ENCODE measurements at regions of chr14 and their contacts with region 1.

Region 1: GRCh38 chr14:32710731-32711680 is 227.7 kb upstream of the NPAS3 start:
- DNase-seq: no peak
- ATAC-seq: peak in 1 of 2 donors; percentile 47
- H3K4me3 ChIP-seq: peak overlapping the region in 1 of 4 donors; percentile 8
- H3K27ac ChIP-seq: peak overlapping the region in 1 of 4 donors; percentile 36
- H3K4me1 ChIP-seq: peaks cover 25 to 40% of the 10 kb centered on the region in 2 donors
- H3K27me3 ChIP-seq: no peaks in the 10 kb centered on the region
- CTCF ChIP-seq: peak; percentile 35 to 53 (median 41)
- POLR2A ChIP-seq: no peak

Region 2: DNA sequence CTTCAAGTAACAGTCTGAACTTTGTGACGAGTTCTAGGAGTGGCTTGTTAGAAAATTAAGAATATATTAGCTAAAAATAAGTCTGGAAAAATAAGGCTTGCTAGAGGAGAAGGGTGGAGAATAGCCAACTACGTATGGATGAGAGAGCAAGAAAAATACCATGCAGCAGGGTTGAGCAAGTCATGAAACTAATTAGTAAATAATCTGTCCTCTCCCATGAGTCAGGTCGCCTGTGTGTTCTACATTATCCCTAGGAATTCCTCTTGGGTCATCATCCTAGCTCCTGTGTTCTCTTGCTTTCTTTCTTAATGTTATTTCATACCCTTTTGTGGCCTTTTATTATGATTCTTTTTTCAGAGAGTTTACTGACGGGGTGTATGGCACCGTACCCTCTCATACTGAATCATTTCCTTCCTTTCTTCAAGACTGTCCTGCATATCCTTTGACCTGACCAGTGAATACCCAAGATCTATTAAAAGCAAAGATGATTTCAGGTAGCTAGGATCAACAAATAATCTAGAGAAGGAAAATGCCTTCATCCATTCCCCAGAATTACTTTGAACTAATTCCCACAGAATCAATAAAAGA is 50.5 kb after region 1 on chr14:
- in situ Hi-C with region 1: no loop called
- intact Hi-C with region 1: no loop called
- DNase-seq: no peak
- ATAC-seq: no peak
- H3K4me3 ChIP-seq: no peak overlapping the region
- H3K27ac ChIP-seq: no peak overlapping the region
- H3K4me1 ChIP-seq: no peaks in the 10 kb centered on the region
- H3K27me3 ChIP-seq: no peaks in the 10 kb centered on the region
- CTCF ChIP-seq: no peak
- POLR2A ChIP-seq: no peak

Region 3: DNA sequence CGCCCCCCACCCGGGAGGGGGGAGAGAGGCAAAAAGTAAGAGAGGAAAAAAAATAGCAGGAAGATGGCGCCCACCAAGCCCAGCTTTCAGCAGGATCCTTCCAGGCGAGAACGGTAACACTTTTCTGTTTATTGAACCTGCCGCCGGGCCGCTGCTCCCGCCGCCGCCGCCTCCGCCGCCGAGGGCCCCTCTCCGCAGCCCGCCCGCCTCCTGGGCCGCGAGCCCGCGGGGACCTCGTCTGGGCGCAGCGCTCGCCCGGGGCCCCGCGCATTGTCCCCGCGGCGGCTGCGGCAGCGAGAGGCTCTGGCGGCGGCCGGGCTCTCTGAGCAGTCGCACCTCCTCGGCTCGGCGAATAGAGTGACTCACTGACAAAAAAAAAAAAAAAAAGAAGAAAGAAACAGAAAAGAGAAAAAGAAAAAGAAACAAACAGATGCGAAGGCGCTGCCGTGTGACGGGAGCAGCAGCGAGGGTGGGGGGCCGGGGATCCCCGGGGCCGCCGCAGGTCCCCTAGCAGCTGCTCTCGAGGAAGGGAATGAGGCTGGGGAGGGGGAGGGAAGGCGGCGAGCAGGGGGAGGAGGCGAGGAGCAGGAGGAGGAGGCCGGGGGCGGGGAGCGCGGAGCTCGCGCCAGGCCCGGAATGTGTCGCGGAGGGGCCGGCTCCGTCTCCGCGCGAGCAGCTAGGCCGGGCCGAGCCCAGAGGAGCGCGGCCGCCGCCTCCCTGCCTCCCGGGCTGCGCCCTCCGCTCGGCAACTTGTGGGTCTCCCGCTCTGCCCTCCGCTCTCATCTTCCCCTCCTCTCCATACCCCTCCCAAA is 228.5 kb after region 1 on chr14:
- in situ Hi-C with region 1: no loop called
- intact Hi-C with region 1: loop called (anchors 10 kb)
- DNase-seq: peak; percentile 63 to 65
- ATAC-seq: peak; percentile 60 to 73
- H3K4me3 ChIP-seq: peak overlapping the region; percentile 61 to 72 (median 70)
- H3K27ac ChIP-seq: peak overlapping the region; percentile 66 to 82 (median 74)
- H3K4me1 ChIP-seq: peaks cover 9 to 16% of the 10 kb centered on the region in 2 donors
- H3K27me3 ChIP-seq: peaks cover 4 to 34% (median 12%) of the 10 kb centered on the region in 3 donors
- CTCF ChIP-seq: no peak
- POLR2A ChIP-seq: no peak

Region 4: DNA sequence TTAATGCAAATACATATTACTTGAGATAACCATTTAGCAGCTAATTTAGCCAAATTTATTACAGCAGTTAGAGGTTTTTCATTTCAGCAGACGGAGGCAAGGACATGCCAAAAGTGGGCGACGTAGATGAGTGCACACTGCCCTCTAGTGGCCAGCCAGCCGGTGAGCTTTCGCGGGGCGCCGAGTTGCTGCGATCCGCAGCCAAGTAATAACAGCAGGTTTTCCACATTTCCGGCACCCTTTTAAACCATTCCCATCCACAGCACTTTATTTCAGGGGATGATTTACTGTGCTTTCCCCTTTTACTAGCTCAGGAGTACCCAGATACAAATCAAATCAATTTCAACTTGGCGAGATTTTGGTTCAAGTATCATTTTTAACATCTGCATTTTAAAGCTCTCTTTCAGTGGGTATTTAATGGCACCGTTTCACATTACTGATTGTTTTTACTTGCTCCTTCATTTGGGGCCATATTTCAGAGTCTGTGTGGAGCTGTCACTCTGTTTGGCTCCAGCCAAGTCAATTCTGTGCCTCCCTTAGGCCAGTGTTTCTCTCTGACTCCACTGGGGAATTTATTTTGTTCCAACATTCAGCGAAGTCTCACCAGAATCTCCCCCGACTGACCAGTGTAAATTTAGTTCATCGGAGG is 1081.8 kb after region 1 on chr14:
- in situ Hi-C with region 1: loop called in 1 of 4 experiments (anchors 10 kb)
- intact Hi-C with region 1: no loop called
- DNase-seq: peak; percentile 41 to 50
- ATAC-seq: peak; percentile 76 to 89
- H3K4me3 ChIP-seq: peak overlapping the region; percentile 34 to 60 (median 40)
- H3K27ac ChIP-seq: no peak overlapping the region
- H3K4me1 ChIP-seq: peaks cover 4 to 6% of the 10 kb centered on the region in 2 donors
- H3K27me3 ChIP-seq: no peaks in the 10 kb centered on the region
- CTCF ChIP-seq: peak; percentile 71 to 96 (median 78)
- POLR2A ChIP-seq: no peak

Measured in gastrocnemius medialis (tissue), 4 donors.